ENCODE measurements at regions of chr19 and their contacts with region 1.

Region 1: DNA sequence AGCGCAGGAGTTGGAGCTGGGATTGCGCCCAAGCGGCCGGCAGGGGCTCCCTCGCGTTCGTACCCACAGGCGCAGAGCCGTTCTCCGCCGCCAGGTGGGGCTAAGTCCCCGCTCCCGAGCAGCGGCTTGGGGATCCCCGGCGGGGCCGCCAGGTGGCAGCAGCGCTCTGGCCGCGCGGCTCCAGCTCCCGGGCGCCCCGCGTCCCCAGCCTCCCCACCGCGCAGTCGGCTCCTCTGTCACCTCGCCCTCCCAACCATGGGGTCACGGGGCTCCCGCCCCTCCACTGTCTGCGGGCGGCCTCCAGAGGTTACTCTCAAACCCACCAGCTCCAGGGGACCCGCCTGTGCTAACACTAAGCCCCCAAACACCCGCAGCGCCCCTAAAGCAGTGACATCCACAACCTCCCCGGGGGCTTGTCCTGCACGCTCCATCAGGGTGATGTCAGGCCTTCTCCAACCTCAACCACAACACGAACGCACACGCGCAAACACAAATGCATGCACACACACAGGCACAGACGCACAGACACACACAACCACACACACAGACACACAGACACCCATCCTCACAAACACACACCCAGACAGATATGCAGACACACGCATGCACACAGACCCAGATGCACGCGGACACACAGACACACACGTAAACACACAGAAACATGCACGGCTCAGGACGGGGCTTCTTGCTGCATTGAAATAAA is 18.4 kb upstream of the KCTD15 start:
- DNase-seq: peak; percentile 68 to 89 (median 82)
- ATAC-seq: peak; percentile 98
- H3K4me3 ChIP-seq: no peak overlapping the region
- H3K4me3 Mint-ChIP-seq: peak overlapping the region; percentile 2
- H3K27ac ChIP-seq: no peak overlapping the region
- H3K27ac Mint-ChIP-seq: no peak overlapping the region
- H3K4me1 ChIP-seq: peaks cover 11% of the 10 kb centered on the region
- H3K4me1 Mint-ChIP-seq: peaks cover 8% of the 10 kb centered on the region
- H3K27me3 ChIP-seq: peaks cover 0 to 7% of the 10 kb centered on the region in 2 experiments
- H3K27me3 Mint-ChIP-seq: peaks cover 35% of the 10 kb centered on the region
- CTCF ChIP-seq: peak; percentile 100

Region 2: DNA sequence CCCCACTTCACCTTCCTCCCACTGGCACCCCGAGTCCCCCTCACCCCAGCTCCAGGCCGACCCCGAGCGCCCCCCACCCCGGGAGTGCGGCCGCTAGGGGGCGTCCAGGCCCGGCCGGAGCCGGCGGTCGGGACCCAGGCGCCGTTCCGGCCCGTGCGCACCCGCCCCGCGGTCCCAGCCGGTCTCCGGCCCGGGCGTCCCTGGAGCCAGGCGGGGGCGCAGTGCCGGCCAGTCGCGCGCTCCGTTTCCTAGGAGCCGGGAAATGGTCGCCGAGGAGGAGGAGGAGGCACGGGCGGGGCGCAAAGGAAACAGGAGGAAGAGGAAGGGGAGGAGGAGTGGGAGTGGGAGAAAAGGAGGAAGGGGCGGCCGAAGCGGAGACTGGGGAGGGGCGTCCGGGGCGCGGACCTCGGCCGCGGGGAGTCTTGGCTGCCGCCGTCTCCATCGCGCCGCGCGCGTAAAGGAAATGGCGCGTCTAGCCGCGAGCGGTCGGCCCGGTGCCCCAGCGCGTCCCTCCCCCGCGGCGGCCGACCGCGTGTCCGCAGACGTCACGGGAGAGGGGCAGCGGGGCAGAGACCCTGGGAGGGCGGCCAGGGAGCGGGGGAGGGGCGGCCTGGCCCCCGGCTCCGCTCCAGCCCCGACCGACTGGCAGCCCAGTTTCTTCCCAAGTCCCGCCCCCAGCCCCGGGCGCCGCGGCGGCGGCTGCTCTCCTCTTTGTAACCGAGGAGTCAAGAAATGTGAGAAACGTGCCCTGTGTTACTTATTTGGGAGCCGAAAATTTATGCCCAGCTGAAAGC is 17.3 kb after region 1 on chr19:
- CTCF ChIA-PET with region 1: interaction called, 12 read pairs
- POLR2A ChIA-PET with region 1: no interaction called
- intact Hi-C with region 1: no loop called
- DNase-seq: peak in 4 of 9 experiments; percentile 26 to 40 (median 34)
- ATAC-seq: no peak
- H3K4me3 ChIP-seq: peak overlapping the region in 1 of 2 experiments; percentile 27
- H3K4me3 Mint-ChIP-seq: peak overlapping the region; percentile 66
- H3K27ac ChIP-seq: no peak overlapping the region
- H3K27ac Mint-ChIP-seq: no peak overlapping the region
- H3K4me1 ChIP-seq: no peaks in the 10 kb centered on the region
- H3K4me1 Mint-ChIP-seq: peaks cover 3% of the 10 kb centered on the region
- H3K27me3 ChIP-seq: peaks cover 7 to 15% of the 10 kb centered on the region in 2 experiments
- H3K27me3 Mint-ChIP-seq: peaks cover 40% of the 10 kb centered on the region
- CTCF ChIP-seq: peak; percentile 40

Region 3: GRCh38 chr19:33998739-33999345 is 220.6 kb after region 1 on chr19:
- CTCF ChIA-PET with region 1: interaction called, 5 read pairs
- POLR2A ChIA-PET with region 1: no interaction called
- intact Hi-C with region 1: loop called in 1 of 2 experiments (anchors 5 kb)
- DNase-seq: no peak
- ATAC-seq: no peak
- H3K4me3 ChIP-seq: no peak overlapping the region
- H3K4me3 Mint-ChIP-seq: no peak overlapping the region
- H3K27ac ChIP-seq: no peak overlapping the region
- H3K27ac Mint-ChIP-seq: no peak overlapping the region
- H3K4me1 ChIP-seq: no peaks in the 10 kb centered on the region
- H3K4me1 Mint-ChIP-seq: no peaks in the 10 kb centered on the region
- H3K27me3 ChIP-seq: no peaks in the 10 kb centered on the region
- H3K27me3 Mint-ChIP-seq: peaks cover 16% of the 10 kb centered on the region
- CTCF ChIP-seq: peak; percentile 30

Region 4: GRCh38 chr19:34096020-34096915 is 318.0 kb after region 1 on chr19:
- CTCF ChIA-PET with region 1: no interaction called
- POLR2A ChIA-PET with region 1: no interaction called
- intact Hi-C with region 1: loop called (anchors 1 to 2 kb)
- DNase-seq: peak in 2 of 9 experiments; percentile 38 to 45
- ATAC-seq: no peak
- H3K4me3 ChIP-seq: no peak overlapping the region
- H3K4me3 Mint-ChIP-seq: no peak overlapping the region
- H3K27ac ChIP-seq: no peak overlapping the region
- H3K27ac Mint-ChIP-seq: no peak overlapping the region
- H3K4me1 ChIP-seq: no peaks in the 10 kb centered on the region
- H3K4me1 Mint-ChIP-seq: no peaks in the 10 kb centered on the region
- H3K27me3 ChIP-seq: no peaks in the 10 kb centered on the region
- H3K27me3 Mint-ChIP-seq: peaks cover 18% of the 10 kb centered on the region
- CTCF ChIP-seq: peak; percentile 66

Region 5: GRCh38 chr19:34145741-34146202 is 367.5 kb after region 1 on chr19:
- CTCF ChIA-PET with region 1: interaction called, 8 read pairs
- POLR2A ChIA-PET with region 1: no interaction called
- intact Hi-C with region 1: loop called in 1 of 2 experiments (anchors 1 kb)
- DNase-seq: peak; percentile 8 to 78 (median 54)
- ATAC-seq: peak; percentile 77
- H3K4me3 ChIP-seq: no peak overlapping the region
- H3K4me3 Mint-ChIP-seq: no peak overlapping the region
- H3K27ac ChIP-seq: no peak overlapping the region
- H3K27ac Mint-ChIP-seq: no peak overlapping the region
- H3K4me1 ChIP-seq: no peaks in the 10 kb centered on the region
- H3K4me1 Mint-ChIP-seq: no peaks in the 10 kb centered on the region
- H3K27me3 ChIP-seq: no peaks in the 10 kb centered on the region
- H3K27me3 Mint-ChIP-seq: peaks cover 1% of the 10 kb centered on the region
- CTCF ChIP-seq: peak; percentile 76

Region 6: DNA sequence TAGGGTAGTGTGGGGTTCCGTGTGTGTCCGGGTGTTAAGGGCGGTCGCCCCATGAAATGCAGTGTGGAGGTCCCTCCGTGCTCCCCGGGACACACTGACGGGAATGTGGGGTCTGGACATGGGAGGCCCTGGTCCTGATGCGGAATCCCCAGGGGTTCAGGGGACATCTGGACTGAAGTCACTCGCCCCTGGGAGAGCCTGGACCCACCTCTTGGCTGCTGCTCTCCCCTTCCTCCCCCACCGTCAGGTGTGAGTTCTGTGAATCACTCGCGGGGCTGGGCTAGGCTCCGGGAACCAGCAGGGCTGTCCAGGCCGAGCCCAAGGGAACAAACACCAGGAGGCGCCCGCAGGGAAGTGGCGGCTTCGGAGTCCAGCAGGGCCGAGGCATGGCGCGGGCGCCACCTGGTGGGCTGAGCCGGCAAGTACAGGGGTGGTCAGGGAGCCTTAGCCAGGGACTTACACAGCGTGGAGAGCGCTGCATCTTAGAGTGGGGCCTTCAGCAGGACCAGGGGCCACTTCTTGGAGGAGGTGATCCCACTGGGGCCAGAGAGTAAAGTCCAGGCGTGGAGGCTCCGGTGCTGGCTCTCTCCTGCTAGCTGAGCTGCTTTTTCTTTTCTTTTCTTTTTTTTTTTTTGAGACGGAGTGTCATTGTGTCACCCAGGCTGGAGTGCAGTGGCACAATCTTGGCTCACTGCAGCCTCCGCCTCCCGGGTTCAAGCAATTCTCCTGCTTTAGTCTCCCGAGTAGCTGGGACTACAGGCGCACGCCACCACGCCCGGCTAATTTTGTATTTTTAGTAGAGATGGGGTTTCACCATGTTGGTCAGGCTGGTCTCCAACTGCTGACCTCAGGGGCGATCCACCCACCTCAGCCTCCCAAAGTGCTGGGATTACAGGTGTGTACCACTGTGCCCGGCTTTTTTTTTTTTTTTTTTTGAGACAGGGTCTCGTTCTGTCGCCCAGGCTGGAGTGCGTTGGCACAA is 723.4 kb after region 1 on chr19:
- CTCF ChIA-PET with region 1: no interaction called
- POLR2A ChIA-PET with region 1: no interaction called
- intact Hi-C with region 1: loop called in 1 of 2 experiments (anchors 1 kb)
- DNase-seq: peak; percentile 70 to 90 (median 83)
- ATAC-seq: peak; percentile 76
- H3K4me3 ChIP-seq: peak overlapping the region; percentile 4 to 10
- H3K4me3 Mint-ChIP-seq: peak overlapping the region; percentile 22
- H3K27ac ChIP-seq: no peak overlapping the region
- H3K27ac Mint-ChIP-seq: no peak overlapping the region
- H3K4me1 ChIP-seq: peaks cover 8% of the 10 kb centered on the region
- H3K4me1 Mint-ChIP-seq: peaks cover 7% of the 10 kb centered on the region
- H3K27me3 ChIP-seq: peaks cover 0 to 14% of the 10 kb centered on the region in 2 experiments
- H3K27me3 Mint-ChIP-seq: peaks cover 11% of the 10 kb centered on the region
- CTCF ChIP-seq: peak; percentile 90